Activated B cell treated with CpG ODN at 0.5 μM for 24 hours (primary cell): ENCODE measurements at regions of chr21 and their contacts with region 1.

Region 1: DNA sequence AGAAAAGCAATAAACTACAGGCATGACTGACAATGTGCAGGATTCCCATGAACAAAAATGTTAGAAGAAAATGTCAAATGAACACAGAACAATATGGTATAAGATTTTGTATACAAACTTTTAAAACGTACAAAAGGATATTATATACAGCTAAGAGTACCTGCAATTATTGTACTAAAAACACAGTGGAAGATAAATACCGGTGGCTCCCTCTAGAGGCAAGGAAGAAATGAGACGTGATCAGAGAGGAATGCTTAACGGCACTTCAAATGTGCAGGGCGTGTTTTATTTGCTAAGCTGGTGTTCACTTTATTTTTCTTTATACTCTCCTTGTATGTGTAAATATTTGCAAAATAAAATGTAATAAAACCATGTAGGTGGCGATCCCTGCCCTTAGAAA is 191.8 kb upstream of the SAMSN1 start:
- DNase-seq: no peak
- ATAC-seq: peak; percentile 82
- H3K4me3 Mint-ChIP-seq: no peak overlapping the region
- H3K27ac Mint-ChIP-seq: no peak overlapping the region
- H3K4me1 Mint-ChIP-seq: peaks cover 35% of the 10 kb centered on the region
- H3K27me3 Mint-ChIP-seq: no peaks in the 10 kb centered on the region
- CTCF ChIP-seq: no peak

Region 2: GRCh38 chr21:14306151-14306907 is 431.6 kb before region 1 on chr21:
- CTCF ChIA-PET with region 1: no interaction called
- POLR2A ChIA-PET with region 1: no interaction called
- intact Hi-C with region 1: loop called (anchors 1 kb)
- DNase-seq: no peak
- ATAC-seq: no peak
- H3K4me3 Mint-ChIP-seq: no peak overlapping the region
- H3K27ac Mint-ChIP-seq: no peak overlapping the region
- H3K4me1 Mint-ChIP-seq: peaks cover 4% of the 10 kb centered on the region
- H3K27me3 Mint-ChIP-seq: peaks cover 2% of the 10 kb centered on the region
- CTCF ChIP-seq: no peak

Region 3: DNA sequence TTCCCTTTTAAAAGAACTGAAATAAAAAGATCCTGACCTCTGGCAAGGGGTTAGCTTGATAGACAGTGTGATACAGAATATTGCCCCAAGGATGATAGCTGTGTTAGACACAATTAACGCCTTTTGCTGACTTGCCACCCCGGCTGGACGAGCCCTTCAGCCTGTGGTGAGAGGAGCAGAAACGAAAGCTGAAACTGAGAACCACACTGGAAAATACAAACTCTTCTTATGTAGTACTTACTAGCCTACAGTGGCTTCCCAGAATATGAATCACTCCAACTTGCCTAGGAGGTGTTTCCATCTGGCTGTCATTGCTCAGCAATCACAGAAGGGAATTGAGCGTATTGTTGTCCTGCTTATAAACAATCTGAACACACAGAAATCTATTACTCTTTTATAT is 214.7 kb before region 1 on chr21:
- CTCF ChIA-PET with region 1: interaction called, 13 read pairs
- POLR2A ChIA-PET with region 1: no interaction called
- intact Hi-C with region 1: loop called (anchors 1 kb)
- DNase-seq: no peak
- ATAC-seq: peak; percentile 60
- H3K4me3 Mint-ChIP-seq: peak overlapping the region; percentile 78
- H3K27ac Mint-ChIP-seq: peak overlapping the region; percentile 82
- H3K4me1 Mint-ChIP-seq: peaks cover 63% of the 10 kb centered on the region
- H3K27me3 Mint-ChIP-seq: no peaks in the 10 kb centered on the region
- CTCF ChIP-seq: no peak

Region 4: DNA sequence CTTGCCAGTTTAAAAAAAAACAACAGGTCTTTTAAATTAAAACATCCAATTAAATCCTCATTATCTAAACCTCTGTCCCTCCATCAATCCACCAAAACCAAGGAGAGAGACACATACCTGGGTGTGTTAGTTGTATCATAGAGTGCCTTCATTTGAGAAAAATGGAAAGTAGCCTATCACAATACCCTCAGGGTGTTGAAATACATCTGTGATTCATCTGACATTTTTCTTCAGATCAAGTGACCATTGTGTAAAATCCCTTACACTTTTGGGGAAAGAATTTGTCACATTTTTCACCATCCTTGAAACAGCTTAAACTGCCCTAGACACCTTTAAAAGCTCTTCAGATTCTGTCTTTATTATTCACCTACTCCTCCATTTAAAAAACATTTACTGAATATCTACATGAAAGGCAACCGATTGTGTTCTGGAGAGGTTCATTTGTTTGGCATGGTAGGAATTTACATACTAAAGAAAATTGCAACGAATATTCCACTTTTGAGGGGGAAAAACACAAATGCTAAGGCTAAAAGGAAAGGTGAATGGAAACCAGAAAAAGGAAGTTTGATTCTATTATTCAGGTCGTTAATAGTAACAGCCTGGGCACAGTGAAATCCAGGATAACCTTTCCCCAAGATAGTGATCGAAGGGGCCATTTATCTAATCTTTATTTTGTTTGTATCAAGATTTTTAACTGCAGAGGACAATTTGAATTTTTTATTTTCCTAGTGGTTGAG is 121.5 kb before region 1 on chr21:
- CTCF ChIA-PET with region 1: no interaction called
- POLR2A ChIA-PET with region 1: no interaction called
- intact Hi-C with region 1: loop called (anchors 5 kb)
- DNase-seq: no peak
- ATAC-seq: peak; percentile 25
- H3K4me3 Mint-ChIP-seq: peak overlapping the region; percentile 49
- H3K27ac Mint-ChIP-seq: peak overlapping the region; percentile 78
- H3K4me1 Mint-ChIP-seq: peaks cover 37% of the 10 kb centered on the region
- H3K27me3 Mint-ChIP-seq: no peaks in the 10 kb centered on the region
- CTCF ChIP-seq: no peak

Region 5: GRCh38 chr21:14773777-14774345 is 35.9 kb after region 1 on chr21:
- CTCF ChIA-PET with region 1: interaction called, 4 read pairs
- POLR2A ChIA-PET with region 1: no interaction called
- intact Hi-C with region 1: loop called (anchors 2 kb)
- DNase-seq: peak; percentile 28
- ATAC-seq: peak; percentile 49
- H3K4me3 Mint-ChIP-seq: no peak overlapping the region
- H3K27ac Mint-ChIP-seq: no peak overlapping the region
- H3K4me1 Mint-ChIP-seq: peaks cover 9% of the 10 kb centered on the region
- H3K27me3 Mint-ChIP-seq: no peaks in the 10 kb centered on the region
- CTCF ChIP-seq: peak; percentile 26